Pancreas (tissue), 10 donors: ENCODE measurements at regions of chr10 and their contacts with region 1.

Region 1: DNA sequence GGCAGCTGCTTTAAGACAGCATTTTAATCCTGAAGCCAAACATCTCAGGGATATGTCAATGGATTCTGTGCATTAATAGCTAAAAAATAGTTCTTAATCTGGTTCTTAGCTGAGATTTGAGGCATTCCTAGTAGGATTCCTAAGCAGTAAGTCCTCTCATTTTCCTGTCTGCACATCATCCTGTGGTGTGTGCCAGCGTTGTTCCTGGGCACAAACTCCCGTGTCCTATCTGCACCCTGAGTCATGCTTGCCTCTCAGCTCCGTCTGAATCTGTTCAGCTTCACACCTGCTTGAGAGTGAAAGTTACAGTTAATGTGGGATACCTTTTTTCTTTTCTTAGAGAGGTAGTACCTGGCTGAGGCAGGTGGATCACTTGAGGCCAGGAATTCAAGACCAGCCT is 19.5 kb downstream of the BAG3 start:
- DNase-seq: no peak
- ATAC-seq: no peak
- H3K4me3 ChIP-seq: no peak overlapping the region
- H3K27ac ChIP-seq: no peak overlapping the region
- H3K4me1 ChIP-seq: peaks cover 17 to 28% (median 17%) of the 10 kb centered on the region in 3 donors
- H3K27me3 ChIP-seq: no peaks in the 10 kb centered on the region
- CTCF ChIP-seq: no peak

Region 2: DNA sequence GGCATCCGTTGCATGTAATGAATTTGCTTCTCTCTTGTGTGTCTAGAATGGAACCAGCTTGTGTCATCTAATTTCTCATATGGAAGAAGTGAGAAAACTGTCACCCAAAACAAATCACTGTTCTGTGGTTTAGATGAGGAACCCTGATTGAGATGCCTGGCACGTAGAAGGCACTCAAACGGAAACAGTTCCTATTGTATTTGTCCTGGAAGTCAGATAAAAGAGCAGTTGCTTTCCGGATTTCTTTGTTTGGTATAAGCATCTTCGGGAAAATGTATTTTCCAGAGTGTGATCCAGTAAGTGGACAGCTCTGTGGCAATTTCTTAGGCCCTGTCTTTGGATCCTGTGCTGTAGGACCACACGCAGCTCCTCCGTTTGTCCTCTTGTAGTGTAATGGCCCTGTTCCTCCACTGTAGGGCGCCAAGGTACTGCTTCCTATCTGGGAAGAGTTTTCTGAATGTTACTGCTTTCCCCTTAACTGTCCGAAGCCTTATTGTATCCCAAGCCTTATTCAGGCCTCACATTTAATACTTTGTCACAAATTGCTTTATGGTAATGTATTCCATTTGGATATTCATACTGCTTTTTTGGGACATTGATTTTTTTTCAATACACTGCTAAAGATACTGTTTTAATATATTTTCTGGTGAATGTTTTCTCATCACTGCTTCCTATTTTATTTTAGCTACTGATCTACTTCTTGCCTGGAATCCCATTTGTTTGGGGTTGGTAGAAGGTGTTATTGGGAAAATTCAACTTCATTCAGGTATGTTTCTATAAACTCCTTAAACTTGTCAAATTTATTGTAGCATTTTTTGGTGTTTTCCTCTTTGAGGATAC is 79.9 kb after region 1 on chr10:
- intact Hi-C with region 1: no loop called
- DNase-seq: peak in 4 of 6 donors; percentile 49 to 75 (median 59)
- ATAC-seq: peak; percentile 77 to 98 (median 96)
- H3K4me3 ChIP-seq: no peak overlapping the region
- H3K27ac ChIP-seq: no peak overlapping the region
- H3K4me1 ChIP-seq: peaks cover 8 to 10% (median 9%) of the 10 kb centered on the region in 3 donors
- H3K27me3 ChIP-seq: no peaks in the 10 kb centered on the region
- CTCF ChIP-seq: peak; percentile 61 to 85 (median 71)

Region 3: DNA sequence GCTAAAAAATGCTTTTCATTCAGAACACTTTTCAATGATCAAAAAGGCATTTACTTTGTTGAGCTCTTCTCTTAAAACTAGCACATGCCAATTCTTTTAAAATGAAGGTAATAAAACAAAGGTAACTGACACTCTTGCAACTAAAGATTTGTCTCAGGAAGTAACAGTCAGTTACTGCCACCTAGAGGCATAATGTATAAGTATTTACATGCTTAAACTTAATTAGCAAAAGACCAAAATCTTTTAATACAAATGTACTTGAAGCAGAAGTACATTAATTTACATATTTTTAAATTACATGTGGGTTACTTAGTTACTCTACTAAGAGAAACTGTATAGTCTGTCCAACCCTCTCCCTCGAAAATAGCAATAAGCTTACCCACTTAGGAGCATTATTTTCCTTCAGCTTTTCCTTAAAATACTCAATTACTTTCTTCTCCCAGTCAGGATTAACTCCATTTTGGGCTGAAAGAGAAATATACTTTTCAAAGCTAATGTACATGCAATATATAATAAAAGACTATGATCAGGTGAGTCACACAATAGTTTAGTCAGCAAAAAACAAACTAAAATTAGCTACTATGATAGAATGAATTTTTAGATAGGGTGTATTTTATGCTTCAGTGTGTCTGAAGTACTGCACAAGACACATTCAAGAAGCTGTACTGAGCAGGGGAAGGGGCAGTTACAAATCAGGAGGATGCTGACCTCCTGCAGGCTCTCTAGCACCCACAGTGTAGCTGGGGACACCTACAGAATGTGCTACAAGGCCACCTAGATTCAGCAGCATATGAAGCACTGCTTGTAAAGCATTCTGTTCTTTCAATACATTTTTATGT is 188.9 kb after region 1 on chr10:
- intact Hi-C with region 1: loop called in 1 of 3 experiments (anchors 10 kb)
- DNase-seq: no peak
- ATAC-seq: peak; percentile 35 to 77 (median 72)
- H3K4me3 ChIP-seq: no peak overlapping the region
- H3K27ac ChIP-seq: no peak overlapping the region
- H3K4me1 ChIP-seq: no peaks in the 10 kb centered on the region
- H3K27me3 ChIP-seq: no peaks in the 10 kb centered on the region
- CTCF ChIP-seq: peak; percentile 13 to 52 (median 23)